Esophagus muscularis mucosa (tissue), 4 donors: ENCODE measurements at regions of chr15 and their contacts with region 1.

Region 1: GRCh38 chr15:64775551-64776401 is at the start of gene RBPMS2:
- DNase-seq: no peak
- H3K4me3 ChIP-seq: peak within 1 kb of the TSS; percentile 82 to 97 (median 90)
- H3K27ac ChIP-seq: peak within 1 kb of the TSS; percentile 91 to 98 (median 97)
- H3K4me1 ChIP-seq: peaks cover 20 to 66% (median 53%) of the 10 kb centered on the region in 4 donors
- H3K27me3 ChIP-seq: no peaks in the 10 kb centered on the region
- CTCF ChIP-seq: no peak
- EP300 ChIP-seq: no peak
- POLR2A ChIP-seq: no peak
- total RNA-seq, gene RBPMS2: 27.2 to 64.1 (median 45.4) TPM

Region 2: GRCh38 chr15:64611085-64611725 is 164.6 kb before region 1 on chr15:
- intact Hi-C with region 1: no loop called
- DNase-seq: no peak
- H3K4me3 ChIP-seq: no peak overlapping the region
- H3K27ac ChIP-seq: no peak overlapping the region
- H3K4me1 ChIP-seq: peaks cover 3 to 20% (median 15%) of the 10 kb centered on the region in 4 donors
- H3K27me3 ChIP-seq: no peaks in the 10 kb centered on the region
- CTCF ChIP-seq: no peak
- EP300 ChIP-seq: no peak
- POLR2A ChIP-seq: no peak

Region 3: GRCh38 chr15:64740311-64741170 is 35.2 kb before region 1 on chr15:
- intact Hi-C with region 1: loop called (anchors 2 kb)
- DNase-seq: no peak
- H3K4me3 ChIP-seq: peak overlapping the region; percentile 34 to 50 (median 40)
- H3K27ac ChIP-seq: peak overlapping the region; percentile 86 to 93 (median 90)
- H3K4me1 ChIP-seq: peaks cover 54 to 87% (median 84%) of the 10 kb centered on the region in 4 donors
- H3K27me3 ChIP-seq: no peaks in the 10 kb centered on the region
- CTCF ChIP-seq: peak; percentile 46 to 76 (median 55)
- EP300 ChIP-seq: no peak
- POLR2A ChIP-seq: no peak

Region 4: DNA sequence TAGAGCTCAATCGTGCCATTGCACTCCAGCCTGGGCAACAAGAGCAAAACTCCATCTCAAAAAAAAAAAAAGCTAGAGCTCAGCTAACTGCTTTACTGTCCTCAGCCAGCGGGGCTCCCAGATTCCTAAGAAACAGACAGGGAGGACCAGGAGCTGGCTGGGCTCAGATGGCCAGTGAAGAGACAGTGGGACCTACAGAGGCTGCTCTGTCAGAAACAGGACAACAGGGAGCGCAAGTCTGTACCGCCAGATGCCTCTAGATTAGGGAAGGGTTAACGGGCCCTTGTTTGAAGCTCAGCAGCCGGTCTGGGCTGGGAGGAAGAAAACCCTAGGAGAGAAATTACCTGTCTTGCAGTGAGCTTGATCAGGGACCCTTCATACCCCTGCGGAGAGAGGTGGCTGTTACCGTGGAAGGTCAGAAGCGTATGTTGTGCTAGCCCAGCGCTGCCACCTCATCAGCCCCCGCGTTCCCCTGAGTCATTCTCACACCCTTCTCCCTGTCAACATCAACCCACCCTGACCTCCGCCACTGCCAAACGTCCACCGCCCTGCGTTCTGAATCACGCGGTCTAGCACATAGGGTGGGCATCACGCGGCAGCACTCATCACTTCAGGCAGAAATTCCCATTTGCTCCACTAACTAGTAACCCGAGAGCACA is 25.6 kb before region 1 on chr15:
- intact Hi-C with region 1: loop called (anchors 2 kb)
- DNase-seq: no peak
- H3K4me3 ChIP-seq: peak overlapping the region in 2 of 4 donors; percentile 13 to 33
- H3K27ac ChIP-seq: peak overlapping the region; percentile 84 to 93 (median 88)
- H3K4me1 ChIP-seq: peaks cover 64 to 100% (median 89%) of the 10 kb centered on the region in 4 donors
- H3K27me3 ChIP-seq: no peaks in the 10 kb centered on the region
- CTCF ChIP-seq: peak in 1 of 3 experiments; percentile 23
- EP300 ChIP-seq: peak; percentile 2
- POLR2A ChIP-seq: no peak